MCF 10A (cell line): ENCODE measurements at regions of chr19 and their contacts with region 1.

Region 1: GRCh38 chr19:46521241-46521868 is 25.7 kb upstream of the PNMA8B start:
- DNase-seq: no peak
- H3K4me3 Mint-ChIP-seq: no peak overlapping the region
- H3K27ac Mint-ChIP-seq: no peak overlapping the region
- H3K4me1 Mint-ChIP-seq: no peaks in the 10 kb centered on the region
- H3K27me3 Mint-ChIP-seq: no peaks in the 10 kb centered on the region
- CTCF ChIP-seq: no peak

Region 2: GRCh38 chr19:46542428-46543230 is 21.3 kb after region 1 on chr19:
- CTCF ChIA-PET with region 1: interaction called, 18 read pairs
- POLR2A ChIA-PET with region 1: no interaction called
- intact Hi-C with region 1: loop called (anchors 1 kb)
- DNase-seq: peak; percentile 93
- H3K4me3 Mint-ChIP-seq: no peak overlapping the region
- H3K27ac Mint-ChIP-seq: no peak overlapping the region
- H3K4me1 Mint-ChIP-seq: no peaks in the 10 kb centered on the region
- H3K27me3 Mint-ChIP-seq: no peaks in the 10 kb centered on the region
- CTCF ChIP-seq: peak; percentile 86